PC-3 (cell line): ENCODE measurements at regions of chr6 and their contacts with region 1.

Region 1: GRCh38 chr6:32397252-32397920 is 9.6 kb downstream of the BTNL2 start:
- DNase-seq: no peak
- ATAC-seq: peak; percentile 35; the same call in 1 of the 2 replicates
- H3K4me3 ChIP-seq: no peak overlapping the region
- H3K27ac ChIP-seq: no peak overlapping the region
- H3K4me1 ChIP-seq: peaks cover 14% of the 10 kb centered on the region; the same call in 1 of the 2 replicates
- H3K27me3 ChIP-seq: no peaks in the 10 kb centered on the region
- CTCF ChIP-seq: no peak

Region 2: GRCh38 chr6:32140420-32141046 is 256.9 kb before region 1 on chr6:
- CTCF ChIA-PET with region 1: no interaction called
- POLR2A ChIA-PET with region 1: no interaction called
- intact Hi-C with region 1: no loop called
- DNase-seq: no peak
- ATAC-seq: no peak
- H3K4me3 ChIP-seq: no peak overlapping the region
- H3K27ac ChIP-seq: no peak overlapping the region
- H3K4me1 ChIP-seq: no peaks in the 10 kb centered on the region
- H3K27me3 ChIP-seq: no peaks in the 10 kb centered on the region
- CTCF ChIP-seq: no peak

Region 3: GRCh38 chr6:32819729-32820128 is 422.3 kb after region 1 on chr6:
- CTCF ChIA-PET with region 1: interaction called, 14 read pairs
- POLR2A ChIA-PET with region 1: no interaction called
- intact Hi-C with region 1: no loop called
- DNase-seq: peak; percentile 46
- ATAC-seq: peak; percentile 38
- H3K4me3 ChIP-seq: no peak overlapping the region
- H3K27ac ChIP-seq: no peak overlapping the region
- H3K4me1 ChIP-seq: peaks cover 18% of the 10 kb centered on the region
- H3K27me3 ChIP-seq: no peaks in the 10 kb centered on the region
- CTCF ChIP-seq: no peak